Testis (tissue), 5 donors: ENCODE measurements at regions of chr17 and their contacts with region 1.

Region 1: GRCh38 chr17:42428141-42428944 is 5.3 kb upstream of the CAVIN1 start:
- DNase-seq: peak; percentile 82
- H3K4me3 ChIP-seq: no peak overlapping the region
- H3K27ac ChIP-seq: no peak overlapping the region
- H3K4me1 ChIP-seq: peaks cover 4% of the 10 kb centered on the region
- H3K27me3 ChIP-seq: no peaks in the 10 kb centered on the region
- CTCF ChIP-seq: peak; percentile 59 to 68 (median 66)
- POLR2A ChIP-seq: no peak

Region 2: GRCh38 chr17:42347198-42347597 is 81.1 kb before region 1 on chr17:
- intact Hi-C with region 1: no loop called
- DNase-seq: no peak
- H3K4me3 ChIP-seq: no peak overlapping the region
- H3K27ac ChIP-seq: peak overlapping the region in 1 of 2 donors; percentile 45
- H3K4me1 ChIP-seq: peaks cover 11% of the 10 kb centered on the region
- H3K27me3 ChIP-seq: no peaks in the 10 kb centered on the region
- CTCF ChIP-seq: no peak
- POLR2A ChIP-seq: no peak

Region 3: DNA sequence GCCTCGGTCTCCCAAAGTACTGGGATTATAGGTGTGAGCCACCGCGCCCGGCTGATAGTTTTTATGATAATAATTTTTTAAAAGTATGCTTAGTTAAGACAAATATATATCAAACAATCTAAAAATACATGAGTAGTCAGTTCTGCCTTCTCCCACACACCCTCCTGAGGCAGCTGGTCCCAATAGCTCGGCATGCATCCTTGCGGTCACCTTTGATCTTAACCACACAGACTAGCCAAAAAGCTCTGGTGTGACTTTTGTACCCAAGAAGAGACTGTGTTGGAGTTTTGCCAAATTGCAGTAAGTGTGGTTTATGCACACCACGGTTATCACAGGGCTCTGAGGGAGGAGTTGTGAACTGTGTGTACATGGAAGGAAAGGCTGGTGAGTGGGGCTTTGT is 56.0 kb after region 1 on chr17:
- intact Hi-C with region 1: no loop called
- DNase-seq: no peak
- H3K4me3 ChIP-seq: no peak overlapping the region
- H3K27ac ChIP-seq: no peak overlapping the region
- H3K4me1 ChIP-seq: no peaks in the 10 kb centered on the region
- H3K27me3 ChIP-seq: no peaks in the 10 kb centered on the region
- CTCF ChIP-seq: no peak
- POLR2A ChIP-seq: no peak

Region 4: DNA sequence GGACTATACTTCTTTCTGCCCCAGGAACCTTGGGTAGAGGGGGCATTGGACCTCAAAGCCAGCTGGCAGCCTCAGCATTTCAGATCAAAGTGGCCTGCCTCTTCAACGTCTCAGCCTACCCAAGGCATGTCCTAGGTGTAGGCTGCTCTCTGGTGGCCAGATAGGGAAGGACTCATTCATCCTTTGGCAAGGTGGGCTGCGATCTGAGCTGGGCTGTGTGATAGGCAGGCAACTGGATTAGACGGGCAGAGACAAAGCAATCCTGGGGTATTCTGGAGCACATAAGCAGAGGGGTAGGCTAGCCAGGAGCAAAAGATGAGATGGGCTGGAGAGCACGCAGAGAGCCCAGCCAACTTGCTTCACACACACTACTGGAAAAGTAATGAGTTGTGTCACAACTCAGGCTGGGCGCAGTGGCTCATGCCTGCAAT is 98.9 kb after region 1 on chr17:
- intact Hi-C with region 1: loop called (anchors 10 kb)
- DNase-seq: peak; percentile 88
- H3K4me3 ChIP-seq: no peak overlapping the region
- H3K27ac ChIP-seq: peak overlapping the region; percentile 55 to 93
- H3K4me1 ChIP-seq: peaks cover 37% of the 10 kb centered on the region
- H3K27me3 ChIP-seq: no peaks in the 10 kb centered on the region
- CTCF ChIP-seq: peak; percentile 75 to 94 (median 85)
- POLR2A ChIP-seq: no peak

Region 5: GRCh38 chr17:42554250-42555121 is 126.1 kb after region 1 on chr17:
- intact Hi-C with region 1: no loop called
- DNase-seq: peak; percentile 92
- H3K4me3 ChIP-seq: peak overlapping the region; percentile 81 to 83
- H3K27ac ChIP-seq: peak overlapping the region; percentile 79 to 86
- H3K4me1 ChIP-seq: peaks cover 18% of the 10 kb centered on the region
- H3K27me3 ChIP-seq: no peaks in the 10 kb centered on the region
- CTCF ChIP-seq: no peak
- POLR2A ChIP-seq: no peak

Region 6: GRCh38 chr17:42591411-42591810 is 163.1 kb after region 1 on chr17:
- intact Hi-C with region 1: no loop called
- DNase-seq: no peak
- H3K4me3 ChIP-seq: no peak overlapping the region
- H3K27ac ChIP-seq: no peak overlapping the region
- H3K4me1 ChIP-seq: no peaks in the 10 kb centered on the region
- H3K27me3 ChIP-seq: no peaks in the 10 kb centered on the region
- CTCF ChIP-seq: no peak
- POLR2A ChIP-seq: no peak